Colonic mucosa (tissue), 4 donors: ENCODE measurements at regions of chr20 and their contacts with region 1.

Region 1: GRCh38 chr20:16761305-16761829 is 13.2 kb downstream of the OTOR start:
- DNase-seq: peak; percentile 44
- H3K4me3 ChIP-seq: no peak overlapping the region
- H3K27ac ChIP-seq: no peak overlapping the region
- H3K4me1 ChIP-seq: no peaks in the 10 kb centered on the region
- H3K27me3 ChIP-seq: no peaks in the 10 kb centered on the region
- CTCF ChIP-seq: peak; percentile 59

Region 2: DNA sequence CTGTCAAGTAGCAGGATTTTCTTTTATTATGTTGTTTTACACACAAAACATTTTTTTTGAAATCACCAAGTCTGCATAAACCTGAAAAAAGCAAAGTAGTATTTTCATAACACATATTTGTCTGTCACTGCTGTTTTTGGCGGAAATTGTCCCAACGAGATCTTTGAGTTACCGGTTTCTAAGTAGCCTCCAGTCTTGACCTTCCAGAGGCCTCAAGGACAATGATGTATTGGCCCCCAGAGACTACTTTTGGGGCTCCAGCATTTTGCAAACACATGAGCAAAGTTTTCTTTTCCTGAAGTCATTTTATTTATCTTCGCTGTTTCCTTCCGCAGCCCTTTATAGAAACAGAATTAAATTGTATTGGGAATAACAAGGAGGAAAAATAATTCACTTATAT is 1050.7 kb before region 1 on chr20:
- intact Hi-C with region 1: loop called (anchors 5 kb)
- DNase-seq: no peak
- H3K4me3 ChIP-seq: no peak overlapping the region
- H3K27ac ChIP-seq: no peak overlapping the region
- H3K4me1 ChIP-seq: no peaks in the 10 kb centered on the region
- H3K27me3 ChIP-seq: no peaks in the 10 kb centered on the region
- CTCF ChIP-seq: no peak

Region 3: DNA sequence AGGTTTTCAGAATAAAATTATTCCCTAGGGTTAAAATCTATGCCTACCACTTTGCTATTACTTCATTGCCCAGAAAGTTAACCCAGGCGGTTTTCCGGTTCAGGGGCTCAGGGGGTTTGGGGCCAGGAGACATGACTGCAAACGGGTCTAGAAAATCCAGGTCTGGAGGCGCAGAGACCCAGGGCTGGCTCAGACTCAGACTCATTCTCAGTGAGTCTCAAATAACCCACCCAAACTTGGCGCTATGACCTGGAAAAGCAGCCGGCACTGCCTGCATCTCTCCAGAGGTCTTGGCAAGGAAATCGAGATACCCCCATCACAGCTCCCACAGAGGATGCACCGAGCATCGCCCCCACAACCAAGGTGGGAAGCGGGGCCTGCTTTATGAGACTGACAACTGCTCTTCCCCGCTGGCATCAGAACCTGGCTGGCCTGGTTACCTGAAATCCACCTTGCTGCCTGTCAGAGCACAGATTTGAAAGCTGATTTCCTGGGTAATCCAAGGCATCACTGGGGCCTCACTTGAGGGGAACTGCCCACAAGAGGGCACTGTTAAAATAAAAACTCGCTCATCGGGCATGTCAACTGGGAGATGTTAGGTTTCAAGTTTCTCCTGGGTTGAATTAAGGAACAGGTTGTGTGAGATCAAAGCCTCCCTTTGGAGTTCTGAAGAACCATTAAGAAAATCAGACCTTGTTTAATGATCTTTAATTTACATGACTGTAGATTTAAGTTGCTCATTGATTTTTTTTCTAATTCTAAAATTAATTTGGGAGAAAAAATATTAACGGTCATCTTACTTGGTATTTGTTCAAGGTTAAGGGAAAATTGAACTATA is 243.2 kb before region 1 on chr20:
- intact Hi-C with region 1: loop called (anchors 10 kb)
- DNase-seq: peak; percentile 57
- H3K4me3 ChIP-seq: no peak overlapping the region
- H3K27ac ChIP-seq: no peak overlapping the region
- H3K4me1 ChIP-seq: no peaks in the 10 kb centered on the region
- H3K27me3 ChIP-seq: no peaks in the 10 kb centered on the region
- CTCF ChIP-seq: peak; percentile 63